Heart left ventricle (tissue), 16 donors: ENCODE measurements at regions of chrX and their contacts with region 1.

Region 1: GRCh38 chrX:71565474-71566041 is 12.7 kb upstream of the GCNA start:
- DNase-seq: no peak
- ATAC-seq: peak in 1 of 4 donors; percentile 46
- H3K4me3 ChIP-seq: no peak overlapping the region
- H3K27ac ChIP-seq: no peak overlapping the region
- H3K4me1 ChIP-seq: peaks cover 0 to 9% (median 0%) of the 10 kb centered on the region in 12 donors
- H3K27me3 ChIP-seq: no peaks in the 10 kb centered on the region
- CTCF ChIP-seq: no peak
- POLR2A ChIP-seq: no peak

Region 2: GRCh38 chrX:71378732-71379131 is 186.8 kb before region 1 on chrX:
- intact Hi-C with region 1: loop called in 1 of 10 experiments (anchors 10 kb)
- DNase-seq: peak in 1 of 5 donors; percentile 31
- ATAC-seq: peak in 1 of 4 donors; percentile 55
- H3K4me3 ChIP-seq: no peak overlapping the region
- H3K27ac ChIP-seq: no peak overlapping the region
- H3K4me1 ChIP-seq: no peaks in the 10 kb centered on the region
- H3K27me3 ChIP-seq: no peaks in the 10 kb centered on the region
- CTCF ChIP-seq: no peak
- POLR2A ChIP-seq: no peak

Region 3: DNA sequence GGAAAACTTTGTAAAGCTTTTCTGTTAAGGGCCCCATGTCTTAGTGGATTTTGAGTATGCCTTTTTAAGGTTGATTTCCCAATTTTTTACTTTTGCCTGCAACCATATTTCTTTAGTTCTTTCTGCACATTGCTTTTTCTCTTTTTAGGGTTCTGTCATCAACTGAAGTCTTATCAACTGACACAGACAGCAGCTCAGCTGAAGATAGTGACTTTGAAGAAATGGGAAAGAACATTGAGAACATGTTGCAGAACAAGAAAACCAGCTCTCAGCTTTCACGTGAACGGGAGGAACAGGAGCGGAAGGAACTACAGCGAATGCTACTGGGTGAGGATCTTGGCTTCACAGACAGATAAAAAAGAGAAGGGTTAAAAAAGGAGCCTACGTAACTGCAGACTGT is 171.6 kb before region 1 on chrX:
- intact Hi-C with region 1: loop called in 3 of 10 experiments (anchors 10 kb)
- DNase-seq: no peak
- ATAC-seq: no peak
- H3K4me3 ChIP-seq: no peak overlapping the region
- H3K27ac ChIP-seq: no peak overlapping the region
- H3K4me1 ChIP-seq: no peaks in the 10 kb centered on the region
- H3K27me3 ChIP-seq: no peaks in the 10 kb centered on the region
- CTCF ChIP-seq: no peak
- POLR2A ChIP-seq: no peak

Region 4: GRCh38 chrX:71400710-71401109 is 164.8 kb before region 1 on chrX:
- intact Hi-C with region 1: loop called in 3 of 10 experiments (anchors 10 kb)
- DNase-seq: no peak
- ATAC-seq: no peak
- H3K4me3 ChIP-seq: no peak overlapping the region
- H3K27ac ChIP-seq: no peak overlapping the region
- H3K4me1 ChIP-seq: no peaks in the 10 kb centered on the region
- H3K27me3 ChIP-seq: no peaks in the 10 kb centered on the region
- CTCF ChIP-seq: no peak
- POLR2A ChIP-seq: no peak

Region 5: DNA sequence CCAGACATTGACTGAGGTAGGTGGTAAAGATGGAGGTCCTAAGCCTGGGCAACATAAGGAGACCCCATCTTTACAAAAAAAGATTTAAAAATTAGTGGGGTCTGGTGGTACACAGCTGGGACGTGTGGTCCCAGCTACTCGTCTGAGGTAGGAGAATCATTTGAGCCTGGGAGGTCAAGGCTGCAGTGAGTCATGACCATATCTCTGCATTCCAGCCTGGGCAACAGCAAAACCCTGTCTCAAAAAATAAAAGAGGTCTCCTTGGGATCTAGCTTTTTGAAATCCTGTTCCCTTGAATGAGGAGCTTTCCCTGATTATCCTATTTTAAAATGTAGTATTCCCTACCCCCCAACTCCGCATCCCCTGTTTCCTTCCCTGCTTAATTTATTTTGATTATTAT is 111.3 kb before region 1 on chrX:
- intact Hi-C with region 1: loop called in 1 of 10 experiments (anchors 10 kb)
- DNase-seq: no peak
- ATAC-seq: no peak
- H3K4me3 ChIP-seq: no peak overlapping the region
- H3K27ac ChIP-seq: no peak overlapping the region
- H3K4me1 ChIP-seq: no peaks in the 10 kb centered on the region
- H3K27me3 ChIP-seq: peaks cover 0 to 6% (median 0%) of the 10 kb centered on the region in 9 donors
- CTCF ChIP-seq: no peak
- POLR2A ChIP-seq: no peak